MCF 10A (cell line): ENCODE measurements at regions of chr21 and their contacts with region 1.

Region 1: DNA sequence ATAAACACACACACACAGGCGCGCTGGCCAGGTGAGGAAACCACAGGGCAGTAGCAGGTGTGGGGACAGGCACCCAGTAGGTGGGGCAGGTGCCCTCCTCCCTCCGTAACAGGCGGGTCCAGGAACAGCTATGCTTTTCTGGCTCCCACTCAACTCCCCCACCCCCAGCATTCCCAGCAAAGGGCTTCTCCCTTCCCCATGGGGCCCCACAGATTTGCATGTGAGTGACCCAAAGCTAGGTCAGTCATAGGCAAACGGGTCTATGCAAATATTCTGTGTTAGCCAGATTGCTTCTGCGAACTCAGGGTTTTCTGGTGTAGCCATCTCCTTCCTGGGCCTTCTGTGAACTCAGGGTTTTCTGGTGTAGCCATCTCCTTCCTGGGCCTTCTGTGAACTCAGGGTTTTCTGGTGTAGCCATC is 114.2 kb downstream of the SIK1 start:
- DNase-seq: no peak
- H3K4me3 Mint-ChIP-seq: no peak overlapping the region
- H3K27ac Mint-ChIP-seq: no peak overlapping the region
- H3K4me1 Mint-ChIP-seq: peaks cover 28% of the 10 kb centered on the region
- H3K27me3 Mint-ChIP-seq: no peaks in the 10 kb centered on the region
- CTCF ChIP-seq: no peak

Region 2: GRCh38 chr21:42923541-42924432 is 389.0 kb before region 1 on chr21:
- CTCF ChIA-PET with region 1: no interaction called
- POLR2A ChIA-PET with region 1: no interaction called
- intact Hi-C with region 1: no loop called
- DNase-seq: peak; percentile 91
- H3K4me3 Mint-ChIP-seq: no peak overlapping the region
- H3K27ac Mint-ChIP-seq: peak overlapping the region; percentile 86
- H3K4me1 Mint-ChIP-seq: peaks cover 11% of the 10 kb centered on the region
- H3K27me3 Mint-ChIP-seq: no peaks in the 10 kb centered on the region
- CTCF ChIP-seq: peak; percentile 58

Region 3: DNA sequence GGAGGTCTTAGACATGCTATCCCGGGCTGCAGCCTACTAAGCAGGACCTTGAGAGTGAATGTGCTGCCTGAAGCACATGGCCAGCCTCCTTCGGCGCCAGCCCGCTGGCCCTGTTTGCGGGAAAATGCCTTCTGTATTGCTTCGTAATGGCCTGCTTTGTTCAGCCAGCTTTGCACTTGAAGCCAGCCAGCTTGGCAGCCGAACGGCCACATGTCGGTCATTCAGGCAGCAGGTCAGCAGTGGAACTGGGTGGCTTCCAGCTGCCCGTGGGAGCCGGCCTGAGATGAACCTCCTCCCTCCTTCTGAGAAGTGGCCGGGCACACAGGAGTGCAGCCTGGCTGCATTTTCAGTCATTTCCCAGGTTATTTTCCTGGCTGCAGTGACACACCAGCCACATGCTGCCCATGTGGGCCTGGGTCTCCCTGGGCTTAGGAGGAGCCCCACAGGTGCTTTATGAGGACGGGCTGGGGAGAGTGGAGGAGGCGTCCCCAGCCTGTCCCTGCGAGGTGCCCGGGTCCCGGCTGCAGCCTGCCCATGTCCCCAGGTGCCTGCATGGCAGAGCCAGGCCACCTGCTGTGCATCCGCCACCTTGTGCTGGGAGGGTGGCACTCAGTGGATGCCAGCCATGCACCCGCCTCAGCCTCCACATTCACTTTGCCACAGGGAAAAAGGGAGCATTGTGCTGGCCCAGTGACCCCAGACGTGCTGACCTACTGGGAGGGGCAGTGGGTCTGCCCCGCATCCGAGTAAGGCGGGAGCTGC is 10.7 kb after region 1 on chr21:
- CTCF ChIA-PET with region 1: no interaction called
- POLR2A ChIA-PET with region 1: interaction called, 12 read pairs
- intact Hi-C with region 1: no loop called
- DNase-seq: no peak
- H3K4me3 Mint-ChIP-seq: no peak overlapping the region
- H3K27ac Mint-ChIP-seq: no peak overlapping the region
- H3K4me1 Mint-ChIP-seq: peaks cover 15% of the 10 kb centered on the region
- H3K27me3 Mint-ChIP-seq: no peaks in the 10 kb centered on the region
- CTCF ChIP-seq: no peak

Region 4: DNA sequence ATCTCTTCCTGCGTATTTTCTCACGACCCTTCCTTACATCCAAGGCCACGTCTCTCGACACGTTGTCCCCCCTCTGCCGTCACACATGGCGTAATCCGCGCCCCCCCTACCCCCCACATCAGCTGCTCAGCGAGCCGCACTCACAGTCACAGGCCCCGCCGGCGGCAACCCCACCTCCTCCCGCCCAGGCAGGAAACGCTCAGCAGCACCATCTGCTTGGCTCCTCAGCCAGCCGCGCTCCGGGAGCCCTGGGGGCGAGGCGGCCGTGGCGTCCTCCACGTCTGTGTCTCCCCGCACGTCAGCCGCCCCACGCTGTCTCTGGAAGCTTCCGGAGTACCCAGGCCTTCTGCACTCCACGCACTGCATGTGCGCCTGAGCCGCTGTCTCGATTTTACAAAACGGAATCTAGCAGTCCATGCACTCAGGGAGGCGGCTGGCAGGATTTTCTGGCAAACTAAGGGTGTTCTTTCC is 49.6 kb after region 1 on chr21:
- CTCF ChIA-PET with region 1: no interaction called
- POLR2A ChIA-PET with region 1: interaction called, 10 read pairs
- intact Hi-C with region 1: no loop called
- DNase-seq: no peak
- H3K4me3 Mint-ChIP-seq: no peak overlapping the region
- H3K27ac Mint-ChIP-seq: no peak overlapping the region
- H3K4me1 Mint-ChIP-seq: peaks cover 12% of the 10 kb centered on the region
- H3K27me3 Mint-ChIP-seq: no peaks in the 10 kb centered on the region
- CTCF ChIP-seq: no peak